ENCODE measurements at regions of chr6 and their contacts with region 1.

Region 1: GRCh38 chr6:106439446-106439845 is 78.9 kb downstream of the CRYBG1 start:
- DNase-seq: no peak
- H3K4me3 ChIP-seq: no peak overlapping the region
- H3K27ac ChIP-seq: no peak overlapping the region
- H3K4me1 ChIP-seq: no peaks in the 10 kb centered on the region
- H3K27me3 ChIP-seq: no peaks in the 10 kb centered on the region
- CTCF ChIP-seq: no peak
- EP300 ChIP-seq: no peak
- POLR2A ChIP-seq: no peak
- RAD21 ChIP-seq: no peak

Region 2: GRCh38 chr6:106309766-106310373 is 129.6 kb before region 1 on chr6:
- CTCF ChIA-PET with region 1: no interaction called
- POLR2A ChIA-PET with region 1: no interaction called
- DNase-seq: no peak
- H3K4me3 ChIP-seq: no peak overlapping the region
- H3K27ac ChIP-seq: no peak overlapping the region
- H3K4me1 ChIP-seq: no peaks in the 10 kb centered on the region
- H3K27me3 ChIP-seq: no peaks in the 10 kb centered on the region
- CTCF ChIP-seq: no peak
- EP300 ChIP-seq: no peak
- POLR2A ChIP-seq: no peak
- RAD21 ChIP-seq: no peak

Region 3: DNA sequence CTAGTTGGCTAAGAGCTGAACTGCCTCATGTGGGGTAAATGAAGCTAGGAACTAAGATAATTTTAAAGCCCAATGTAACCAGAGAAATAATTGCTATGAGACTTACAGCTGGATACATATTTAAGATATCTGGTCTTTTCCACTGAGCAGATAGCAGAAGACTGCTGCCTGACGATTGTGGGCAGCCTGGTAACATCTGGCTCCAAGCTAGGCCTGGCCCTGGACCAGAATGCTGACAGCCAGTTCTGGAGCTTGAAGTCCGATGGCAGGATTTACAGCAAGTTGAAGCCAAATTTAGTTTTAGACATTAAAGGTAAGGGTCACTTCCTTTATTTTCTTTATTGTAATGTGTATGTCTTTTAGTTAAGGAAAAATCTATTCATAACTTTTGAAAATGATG is 124.2 kb after region 1 on chr6:
- CTCF ChIA-PET with region 1: interaction called, 46 read pairs
- POLR2A ChIA-PET with region 1: no interaction called
- DNase-seq: no peak
- H3K4me3 ChIP-seq: no peak overlapping the region
- H3K27ac ChIP-seq: no peak overlapping the region
- H3K4me1 ChIP-seq: peaks cover 0 to 10% (median 5%) of the 10 kb centered on the region in 4 experiments; a peak in 3 of 7 replicates
- H3K27me3 ChIP-seq: no peaks in the 10 kb centered on the region
- CTCF ChIP-seq: no peak
- EP300 ChIP-seq: no peak
- POLR2A ChIP-seq: no peak
- RAD21 ChIP-seq: no peak